Astrocyte of the cerebellum (primary cell): ENCODE measurements at regions of chr1 and their contacts with region 1.

Region 1: GRCh38 chr1:226827968-226828513 is 42.4 kb upstream of the PSEN2 start:
- DNase-seq: peak; percentile 93
- H3K4me3 ChIP-seq: no peak overlapping the region
- CTCF ChIP-seq: peak; percentile 92

Region 2: DNA sequence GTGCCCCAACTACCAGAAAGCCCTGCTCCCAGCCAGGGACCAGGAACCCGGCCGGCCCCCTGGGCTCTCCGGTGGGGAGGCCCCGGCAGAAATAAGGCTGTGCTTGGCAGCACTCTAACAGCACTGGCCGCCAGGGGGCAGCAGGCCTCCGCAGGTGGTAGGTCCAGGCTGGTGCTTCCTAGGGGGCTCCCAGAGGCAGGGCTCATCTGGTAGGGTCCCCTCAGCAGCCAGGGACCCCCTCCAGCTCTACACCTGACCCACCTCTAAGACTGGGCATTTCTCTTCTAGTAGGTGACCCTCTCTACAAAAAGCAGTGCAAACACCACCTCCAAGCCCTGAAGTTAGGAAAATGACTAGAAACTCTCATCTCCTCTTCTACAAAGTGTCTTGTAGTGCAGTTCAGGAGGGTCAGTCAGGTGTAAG is 193.9 kb before region 1 on chr1:
- in situ Hi-C with region 1: loop called (anchors 25 kb)
- DNase-seq: peak; percentile 26
- H3K4me3 ChIP-seq: no peak overlapping the region
- CTCF ChIP-seq: peak; percentile 91

Region 3: GRCh38 chr1:226736908-226737818 is 90.9 kb before region 1 on chr1:
- in situ Hi-C with region 1: no loop called
- DNase-seq: no peak
- H3K4me3 ChIP-seq: peak overlapping the region; percentile 94
- CTCF ChIP-seq: no peak

Region 4: GRCh38 chr1:226870401-226871279 is 42.6 kb after region 1 on chr1 and contains the start of gene PSEN2:
- in situ Hi-C with region 1: no loop called
- DNase-seq: no peak
- H3K4me3 ChIP-seq: peak within 1 kb of the TSS; percentile 62
- CTCF ChIP-seq: peak; percentile 8